HAP-1 (cell line): ENCODE measurements at regions of chr19 and their contacts with region 1.

Region 1: DNA sequence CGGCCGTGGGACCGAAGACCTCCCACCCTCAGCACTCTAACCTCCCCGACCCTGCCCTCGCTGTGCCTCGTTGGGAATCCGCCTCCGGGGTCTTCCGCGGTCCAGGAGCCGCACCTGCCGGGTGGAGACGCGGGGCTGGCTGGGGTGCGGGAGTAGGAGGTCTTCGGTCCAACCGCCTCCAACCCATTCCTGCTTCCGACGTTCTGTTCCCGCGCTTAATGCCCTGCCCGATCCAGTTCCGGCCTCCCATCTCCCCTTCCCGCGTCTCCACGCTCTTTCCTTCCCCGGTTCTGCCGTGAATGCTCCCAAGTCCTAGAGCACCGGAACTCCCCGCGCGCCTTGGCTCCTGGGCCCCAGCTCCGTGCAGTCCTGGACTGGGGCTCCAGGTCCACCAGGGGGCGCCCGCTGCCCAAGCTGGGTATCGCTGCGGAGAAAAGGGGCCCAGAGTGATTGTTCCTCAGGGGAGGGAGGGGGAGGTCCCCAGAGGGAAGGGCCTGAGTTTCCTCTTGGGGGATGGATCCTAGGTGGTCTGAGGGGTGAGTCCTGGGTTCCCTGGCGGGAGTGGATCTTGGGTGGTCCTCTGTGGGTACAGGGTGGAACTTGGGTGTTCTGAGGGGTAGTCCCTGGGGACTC is 14.1 kb upstream of the TNFSF9 start:
- DNase-seq: peak; percentile 82 to 97
- H3K4me3 ChIP-seq: peak overlapping the region; percentile 56
- H3K4me1 ChIP-seq: peaks cover 3% of the 10 kb centered on the region
- H3K27me3 ChIP-seq: no peaks in the 10 kb centered on the region

Region 2: GRCh38 chr19:6460101-6460853 is 56.5 kb before region 1 on chr19:
- in situ Hi-C with region 1: no loop called
- DNase-seq: peak; percentile 95 to 99
- H3K4me3 ChIP-seq: peak overlapping the region; percentile 61
- H3K4me1 ChIP-seq: peaks cover 2% of the 10 kb centered on the region; the same call in 1 of the 2 replicates
- H3K27me3 ChIP-seq: no peaks in the 10 kb centered on the region

Region 3: GRCh38 chr19:6632002-6632621 is 115.3 kb after region 1 on chr19:
- in situ Hi-C with region 1: loop called (anchors 5 kb)
- DNase-seq: peak; percentile 60 to 91
- H3K4me3 ChIP-seq: no peak overlapping the region
- H3K4me1 ChIP-seq: no peaks in the 10 kb centered on the region
- H3K27me3 ChIP-seq: no peaks in the 10 kb centered on the region

Region 4: DNA sequence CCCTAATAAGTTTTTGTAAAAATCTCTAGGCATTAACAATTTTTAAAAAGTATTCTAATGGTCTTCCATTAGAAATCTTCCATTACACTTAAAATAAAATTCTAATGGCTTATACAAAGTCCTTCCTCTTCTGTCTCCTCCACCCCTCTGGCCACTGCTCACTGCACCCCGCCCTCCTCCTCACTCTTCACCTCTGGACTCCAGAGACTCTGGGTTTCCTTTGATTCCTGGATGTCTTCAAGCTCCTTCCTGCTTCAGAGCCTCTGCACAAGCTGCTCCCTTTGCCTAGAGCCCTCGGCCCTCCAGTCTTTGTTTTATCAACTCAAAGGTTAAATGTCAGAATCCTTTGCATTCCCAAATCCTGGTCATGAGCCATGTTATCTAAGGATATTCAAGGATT is 132.4 kb after region 1 on chr19:
- in situ Hi-C with region 1: no loop called
- DNase-seq: peak; percentile 24 to 40
- H3K4me3 ChIP-seq: no peak overlapping the region
- H3K4me1 ChIP-seq: peaks cover 33% of the 10 kb centered on the region
- H3K27me3 ChIP-seq: no peaks in the 10 kb centered on the region

Region 5: DNA sequence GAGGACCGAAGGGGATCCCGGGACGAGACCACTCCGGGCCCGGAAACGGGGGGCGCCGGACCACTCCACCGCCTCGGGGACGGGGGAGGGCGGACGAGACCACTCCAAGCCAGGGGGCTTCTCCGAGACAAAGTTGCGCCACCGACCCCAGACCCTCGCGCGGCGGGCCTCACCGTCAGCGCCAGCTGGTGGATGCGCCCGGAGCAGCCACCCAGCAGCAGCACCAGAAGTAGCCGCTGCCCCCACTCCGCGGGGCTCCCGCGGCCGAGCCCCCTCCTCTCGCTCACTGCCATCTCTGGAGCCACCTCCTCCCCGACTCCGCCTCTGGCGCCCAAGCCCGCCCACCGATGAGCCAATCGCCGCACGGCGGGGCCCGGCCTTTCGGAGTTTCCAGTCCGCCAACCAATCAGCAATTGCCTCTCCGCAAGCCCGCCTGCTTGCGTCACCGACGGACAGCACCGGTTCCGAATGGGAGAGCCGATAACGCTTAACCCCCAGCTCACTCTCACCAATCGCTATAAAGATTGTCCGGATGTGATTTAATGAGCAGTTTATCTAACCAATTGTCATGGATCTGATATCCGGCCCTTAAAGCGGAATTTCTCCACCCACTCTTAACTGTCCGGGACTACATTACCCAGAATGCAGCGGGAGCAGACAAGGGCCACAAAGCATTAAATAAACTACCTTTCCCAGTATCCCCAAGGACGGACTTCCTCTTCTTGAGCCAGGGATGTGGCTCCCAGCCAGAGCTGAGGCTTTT is 220.7 kb after region 1 on chr19 and contains the start of gene GPR108:
- in situ Hi-C with region 1: loop called (anchors 5 kb)
- DNase-seq: peak; percentile 99 to 100
- H3K4me3 ChIP-seq: peak within 1 kb of the TSS; percentile 74
- H3K4me1 ChIP-seq: peaks cover 24% of the 10 kb centered on the region
- H3K27me3 ChIP-seq: no peaks in the 10 kb centered on the region

Region 6: GRCh38 chr19:6862673-6863078 is 345.9 kb after region 1 on chr19:
- in situ Hi-C with region 1: loop called (anchors 25 kb)
- DNase-seq: peak; percentile 83 to 91
- H3K4me3 ChIP-seq: peak overlapping the region; percentile 19
- H3K4me1 ChIP-seq: no peaks in the 10 kb centered on the region
- H3K27me3 ChIP-seq: peaks cover 5% of the 10 kb centered on the region